ENCODE measurements at regions of chr15 and their contacts with region 1.

Region 1: DNA sequence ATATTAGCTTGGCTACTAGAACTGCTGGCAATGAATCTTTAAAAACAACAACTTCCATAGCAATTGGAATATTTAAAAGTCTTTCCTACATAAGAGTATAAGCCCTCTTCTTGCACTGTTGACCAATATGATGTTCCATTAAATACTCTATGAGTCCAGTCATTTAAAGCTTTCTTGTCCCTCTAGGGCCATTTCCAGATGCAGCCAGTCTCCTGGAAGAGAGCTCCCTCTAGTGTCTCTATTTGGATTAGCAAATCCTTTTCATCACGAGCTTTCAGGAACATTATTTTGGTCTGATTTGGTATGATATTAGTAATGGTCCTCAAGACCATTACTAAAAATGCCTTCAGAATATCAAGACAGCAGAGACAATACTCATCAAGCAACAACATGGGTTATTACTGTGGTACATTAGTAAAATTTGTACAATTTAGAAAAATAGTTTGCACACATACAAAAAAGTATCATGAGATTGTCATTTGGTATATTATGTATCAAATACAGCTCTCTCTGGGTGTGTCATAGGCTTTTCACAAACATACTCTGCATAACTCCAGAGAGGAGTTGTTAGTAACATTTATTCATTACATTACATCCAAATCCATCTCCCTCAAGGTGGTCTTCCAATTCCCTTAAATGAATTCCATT is 101.3 kb downstream of the DPH6 start:
- DNase-seq: no peak
- ATAC-seq: peak; percentile 52
- H3K4me3 Mint-ChIP-seq: no peak overlapping the region
- H3K27ac Mint-ChIP-seq: peak overlapping the region; percentile 65; the same call in 1 of the 2 replicates
- H3K4me1 Mint-ChIP-seq: peaks cover 34% of the 10 kb centered on the region
- H3K27me3 Mint-ChIP-seq: no peaks in the 10 kb centered on the region
- CTCF ChIP-seq: peak; percentile 76

Region 2: GRCh38 chr15:35019386-35020083 is 425.1 kb before region 1 on chr15:
- CTCF ChIA-PET with region 1: interaction called, 12 read pairs
- POLR2A ChIA-PET with region 1: no interaction called
- DNase-seq: no peak
- ATAC-seq: peak; percentile 13
- H3K4me3 Mint-ChIP-seq: peak overlapping the region; percentile 45
- H3K27ac Mint-ChIP-seq: peak overlapping the region; percentile 98
- H3K4me1 Mint-ChIP-seq: peaks cover 49% of the 10 kb centered on the region
- H3K27me3 Mint-ChIP-seq: no peaks in the 10 kb centered on the region
- CTCF ChIP-seq: no peak

Region 3: DNA sequence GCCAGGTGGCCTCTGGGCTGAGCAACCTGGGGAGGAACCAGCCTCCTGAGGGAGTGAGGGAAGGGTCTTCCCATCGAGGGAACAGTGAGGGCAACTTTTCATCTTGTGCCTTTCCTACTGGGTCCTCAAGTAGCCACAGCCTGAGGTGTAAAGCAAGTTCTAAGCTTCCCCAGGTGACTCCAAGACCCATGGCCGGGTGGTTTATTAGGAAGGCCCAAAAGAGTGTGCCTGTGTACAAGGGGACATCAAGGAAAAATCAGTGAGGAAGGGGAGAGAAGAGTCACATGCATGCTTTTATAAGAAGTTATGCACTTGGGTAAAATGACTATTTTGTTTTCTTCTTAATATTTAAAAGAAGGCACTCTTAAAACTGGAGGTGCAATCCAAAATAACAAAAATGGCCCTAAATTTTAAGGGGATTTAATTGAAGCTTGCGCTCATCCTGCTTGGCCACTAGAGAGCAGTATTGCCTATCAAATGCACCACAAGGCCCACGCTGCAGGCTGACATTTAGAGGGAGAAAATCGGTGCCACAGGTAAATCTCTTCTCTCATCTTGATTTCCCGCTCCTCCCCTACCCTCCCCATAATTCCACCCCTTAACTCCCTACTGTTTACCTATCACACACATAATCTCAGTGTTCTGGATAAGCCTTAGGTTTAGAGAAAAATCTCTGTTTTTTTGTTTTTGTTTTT is 366.3 kb before region 1 on chr15:
- CTCF ChIA-PET with region 1: interaction called, 81 read pairs
- POLR2A ChIA-PET with region 1: no interaction called
- DNase-seq: peak; percentile 42
- ATAC-seq: peak; percentile 90
- H3K4me3 Mint-ChIP-seq: no peak overlapping the region
- H3K27ac Mint-ChIP-seq: peak overlapping the region; percentile 56
- H3K4me1 Mint-ChIP-seq: peaks cover 15% of the 10 kb centered on the region
- H3K27me3 Mint-ChIP-seq: peaks cover 4% of the 10 kb centered on the region; the same call in 1 of the 2 replicates
- CTCF ChIP-seq: peak; percentile 80

Region 4: GRCh38 chr15:35362195-35362829 is 82.4 kb before region 1 on chr15:
- CTCF ChIA-PET with region 1: no interaction called
- POLR2A ChIA-PET with region 1: no interaction called
- DNase-seq: no peak
- ATAC-seq: no peak
- H3K4me3 Mint-ChIP-seq: no peak overlapping the region
- H3K27ac Mint-ChIP-seq: no peak overlapping the region
- H3K4me1 Mint-ChIP-seq: no peaks in the 10 kb centered on the region
- H3K27me3 Mint-ChIP-seq: peaks cover 3% of the 10 kb centered on the region; the same call in 1 of the 2 replicates
- CTCF ChIP-seq: no peak

Region 5: DNA sequence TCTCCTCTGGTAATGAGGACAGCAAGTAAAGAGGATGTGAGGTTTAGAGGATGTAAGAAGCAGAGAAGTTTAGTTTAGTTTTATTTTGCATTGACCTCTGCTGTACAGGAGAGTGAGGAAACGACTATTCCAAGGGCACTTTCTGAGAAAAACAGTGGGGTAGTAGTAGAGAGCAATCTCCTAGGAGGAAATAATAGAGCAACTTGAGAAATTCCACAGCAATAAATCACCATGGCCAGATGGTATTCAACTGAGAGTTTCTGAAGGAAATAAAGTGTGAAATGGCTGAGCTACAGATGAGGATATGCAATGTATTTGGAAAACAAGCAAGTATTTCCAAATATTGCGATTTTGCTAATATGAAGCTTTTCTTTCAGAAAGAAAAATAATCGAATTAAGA is 17.6 kb before region 1 on chr15:
- CTCF ChIA-PET with region 1: interaction called, 16 read pairs
- POLR2A ChIA-PET with region 1: no interaction called
- DNase-seq: no peak
- ATAC-seq: no peak
- H3K4me3 Mint-ChIP-seq: no peak overlapping the region
- H3K27ac Mint-ChIP-seq: peak overlapping the region; percentile 11; the same call in 1 of the 2 replicates
- H3K4me1 Mint-ChIP-seq: peaks cover 19% of the 10 kb centered on the region
- H3K27me3 Mint-ChIP-seq: no peaks in the 10 kb centered on the region
- CTCF ChIP-seq: no peak

Region 6: DNA sequence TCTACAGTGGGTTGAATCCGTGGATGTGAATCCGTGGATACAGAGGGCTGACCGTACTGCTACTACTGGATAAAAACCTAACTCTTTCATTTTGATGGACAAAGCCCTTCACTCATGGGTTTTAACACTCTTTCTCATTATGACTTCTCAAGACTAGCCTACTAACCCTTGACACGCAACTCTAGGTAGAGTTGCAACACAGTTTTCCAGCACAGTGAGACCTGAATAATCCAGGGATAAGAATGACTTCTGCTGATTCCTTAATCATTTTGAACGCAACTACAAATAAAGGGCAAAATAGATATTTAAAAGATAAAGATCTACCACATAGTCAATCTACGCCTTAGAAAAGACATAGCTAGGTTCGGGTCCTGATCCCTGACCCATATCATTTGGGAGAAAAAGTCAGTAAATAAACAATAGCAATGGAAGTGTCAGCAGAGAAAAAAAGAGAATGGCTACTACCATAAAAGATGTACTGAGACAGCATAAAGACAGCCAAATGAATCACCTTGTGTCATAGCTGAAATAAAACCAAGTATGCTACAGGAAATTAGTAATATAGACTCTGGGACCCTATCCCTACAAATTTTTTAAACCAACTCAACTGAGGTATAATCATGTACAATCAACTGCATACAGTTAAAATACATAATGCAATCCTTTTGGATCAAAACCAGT is 13.6 kb after region 1 on chr15:
- CTCF ChIA-PET with region 1: interaction called, 13 read pairs
- POLR2A ChIA-PET with region 1: no interaction called
- DNase-seq: no peak
- ATAC-seq: no peak
- H3K4me3 Mint-ChIP-seq: no peak overlapping the region
- H3K27ac Mint-ChIP-seq: no peak overlapping the region; the same call in 1 of the 2 replicates
- H3K4me1 Mint-ChIP-seq: no peaks in the 10 kb centered on the region
- H3K27me3 Mint-ChIP-seq: no peaks in the 10 kb centered on the region
- CTCF ChIP-seq: no peak

Region 7: GRCh38 chr15:35479423-35479822 is 34.7 kb after region 1 on chr15:
- CTCF ChIA-PET with region 1: interaction called, 16 read pairs
- POLR2A ChIA-PET with region 1: no interaction called
- DNase-seq: no peak
- ATAC-seq: peak; percentile 80
- H3K4me3 Mint-ChIP-seq: no peak overlapping the region
- H3K27ac Mint-ChIP-seq: no peak overlapping the region; the same call in 1 of the 2 replicates
- H3K4me1 Mint-ChIP-seq: peaks cover 19% of the 10 kb centered on the region
- H3K27me3 Mint-ChIP-seq: no peaks in the 10 kb centered on the region
- CTCF ChIP-seq: no peak

Region 8: DNA sequence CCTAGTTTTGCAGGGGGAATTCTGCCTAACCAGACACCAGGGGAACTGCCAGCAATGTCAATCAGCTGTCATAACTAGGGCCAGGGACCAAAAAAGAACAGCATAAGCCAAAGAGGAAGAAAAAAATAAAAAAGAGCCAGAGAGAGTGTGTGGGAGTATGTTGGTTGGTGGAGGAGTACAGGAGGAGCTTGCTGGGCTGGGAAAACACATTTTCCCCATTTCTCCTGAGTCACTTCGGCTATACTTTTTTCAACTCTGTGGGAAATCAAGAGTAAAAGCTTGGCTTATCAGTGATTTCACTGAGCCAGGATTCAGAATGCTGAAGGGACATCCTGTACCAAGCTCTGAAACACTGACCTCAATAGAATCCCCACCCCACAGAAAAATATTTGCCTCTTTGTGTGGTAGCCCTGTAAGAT is 246.0 kb after region 1 on chr15:
- CTCF ChIA-PET with region 1: no interaction called
- POLR2A ChIA-PET with region 1: no interaction called
- DNase-seq: no peak
- ATAC-seq: no peak
- H3K4me3 Mint-ChIP-seq: no peak overlapping the region
- H3K27ac Mint-ChIP-seq: no peak overlapping the region
- H3K4me1 Mint-ChIP-seq: peaks cover 10% of the 10 kb centered on the region
- H3K27me3 Mint-ChIP-seq: no peaks in the 10 kb centered on the region
- CTCF ChIP-seq: no peak